Esophagus squamous epithelium (tissue), 5 donors: ENCODE measurements at regions of chr20 and their contacts with region 1.

Region 1: DNA sequence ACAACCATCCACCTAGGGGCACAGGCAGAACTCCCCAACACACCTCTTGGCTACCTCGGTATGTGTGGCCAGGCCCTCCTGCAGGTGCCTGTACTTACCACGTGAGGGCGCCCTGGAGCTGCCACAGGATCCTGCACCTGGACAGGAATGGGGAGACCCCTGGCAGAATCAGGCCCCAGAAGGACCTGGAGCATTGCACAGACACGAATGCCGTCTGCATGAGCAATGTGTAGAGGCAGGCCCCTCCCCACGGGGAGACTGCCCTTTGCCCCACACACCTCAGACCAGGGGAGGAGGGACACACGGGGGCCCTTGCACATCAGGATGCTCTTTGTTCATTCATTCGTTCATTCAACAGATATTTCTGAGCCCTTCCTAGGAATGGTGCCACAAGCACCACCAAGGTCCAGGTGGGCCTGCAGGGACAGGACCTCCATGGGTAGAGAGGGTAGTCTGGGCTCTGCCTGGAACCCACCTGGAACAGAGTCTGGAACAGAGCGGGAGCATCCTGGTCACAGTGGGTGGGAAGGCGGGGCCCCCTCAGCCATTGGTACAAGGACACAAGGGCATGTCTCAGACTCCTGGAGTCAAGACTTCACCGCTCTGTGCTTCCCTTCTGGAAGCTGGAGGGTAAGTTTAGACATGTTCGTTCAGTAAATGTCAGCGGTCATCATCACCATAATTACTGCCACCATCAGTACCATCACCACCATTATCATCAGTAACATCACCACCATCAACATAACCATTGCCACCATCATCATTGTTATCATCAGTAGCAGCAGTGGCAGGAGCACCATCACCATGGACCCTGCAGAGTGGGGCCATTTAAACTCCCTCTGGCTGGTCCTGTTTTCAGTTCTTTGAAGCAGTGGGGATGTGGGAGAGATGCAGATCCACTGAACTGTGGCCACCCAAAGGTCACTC is 32.2 kb downstream of the YTHDF1 start:
- DNase-seq: no peak
- H3K4me3 ChIP-seq: no peak overlapping the region
- H3K27ac ChIP-seq: no peak overlapping the region
- H3K4me1 ChIP-seq: peaks cover 3 to 10% (median 5%) of the 10 kb centered on the region in 3 donors
- H3K27me3 ChIP-seq: peaks cover 9 to 54% (median 11%) of the 10 kb centered on the region in 4 donors
- CTCF ChIP-seq: peak; percentile 25 to 74 (median 62)
- POLR2A ChIP-seq: no peak

Region 2: GRCh38 chr20:63056236-63056948 is 127.3 kb before region 1 on chr20:
- intact Hi-C with region 1: loop called (anchors 5 kb)
- DNase-seq: no peak
- H3K4me3 ChIP-seq: no peak overlapping the region
- H3K27ac ChIP-seq: no peak overlapping the region
- H3K4me1 ChIP-seq: peaks cover 0 to 7% (median 0%) of the 10 kb centered on the region in 3 donors
- H3K27me3 ChIP-seq: peaks cover 0 to 91% (median 0%) of the 10 kb centered on the region in 4 donors
- CTCF ChIP-seq: peak; percentile 54 to 91 (median 64)
- POLR2A ChIP-seq: no peak

Region 3: DNA sequence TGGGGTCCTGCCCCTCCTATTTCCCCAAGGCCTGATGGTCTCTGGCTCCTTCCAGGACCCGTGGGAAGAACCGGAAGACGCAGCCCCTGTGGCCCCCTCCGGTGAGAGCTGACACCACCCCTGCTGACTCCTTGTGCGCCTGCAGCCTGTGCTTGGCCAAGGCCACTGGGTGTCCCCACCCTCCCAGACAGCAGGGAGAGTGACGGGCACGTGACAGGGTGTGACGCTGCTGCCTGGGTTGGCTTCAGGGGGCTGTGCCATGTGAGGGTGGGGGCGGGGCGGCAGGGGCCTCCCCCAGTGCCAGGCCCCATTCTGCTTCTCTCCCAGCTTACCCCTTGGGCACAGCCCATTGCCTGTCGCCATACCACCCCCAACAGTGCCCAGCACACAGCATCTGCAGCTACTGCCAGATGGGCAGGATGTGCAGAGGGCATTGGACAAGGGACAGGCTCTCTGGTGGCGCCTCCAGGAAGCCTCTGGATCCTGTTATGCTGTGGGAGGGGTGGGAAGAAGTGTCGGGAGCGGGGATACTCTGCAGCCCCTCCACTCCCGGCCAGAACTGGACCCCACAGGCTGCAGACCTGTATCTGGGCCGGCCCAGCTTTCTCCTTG is 54.9 kb after region 1 on chr20:
- intact Hi-C with region 1: no loop called
- DNase-seq: no peak
- H3K4me3 ChIP-seq: no peak overlapping the region
- H3K27ac ChIP-seq: no peak overlapping the region
- H3K4me1 ChIP-seq: no peaks in the 10 kb centered on the region
- H3K27me3 ChIP-seq: peaks cover 0 to 69% (median 0%) of the 10 kb centered on the region in 4 donors
- CTCF ChIP-seq: no peak
- POLR2A ChIP-seq: no peak